GM18951 (cell line): ENCODE measurements at regions of chr14 and their contacts with region 1.

Region 1: GRCh38 chr14:73503648-73504047 is 12.9 kb downstream of the RIOX1 start:
- POLR2A ChIP-seq: no peak

Region 2: GRCh38 chr14:73633116-73634010 is 129.7 kb after region 1 on chr14:
- in situ Hi-C with region 1: loop called (anchors 10 kb)
- POLR2A ChIP-seq: no peak

Region 3: DNA sequence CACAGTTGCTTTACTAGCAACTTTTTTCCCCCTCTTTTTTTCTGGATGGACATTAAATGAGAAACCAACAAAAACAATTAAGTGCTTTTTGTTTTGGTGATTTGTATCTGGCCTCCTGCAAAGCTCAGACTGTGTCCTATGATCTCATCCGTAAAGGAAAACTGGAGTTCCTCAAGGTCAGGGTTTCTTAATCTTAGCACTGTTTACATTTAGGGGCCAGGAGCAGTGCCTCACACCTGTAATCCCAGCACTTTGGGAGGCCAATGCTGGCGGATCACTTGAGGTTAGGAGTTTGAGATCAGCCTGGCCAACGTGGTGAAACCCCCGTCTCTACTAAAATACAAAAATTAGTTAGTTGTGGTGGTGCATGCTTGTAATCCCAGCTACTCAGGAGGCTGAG is 487.4 kb after region 1 on chr14:
- in situ Hi-C with region 1: no loop called
- POLR2A ChIP-seq: no peak

Region 4: GRCh38 chr14:74038015-74038859 is 534.6 kb after region 1 on chr14:
- in situ Hi-C with region 1: loop called (anchors 25 kb)
- POLR2A ChIP-seq: no peak